ENCODE measurements at regions of chr13 and their contacts with region 1.

Region 1: GRCh38 chr13:91216928-91217690 is 130.4 kb upstream of the MIR17HG start:
- DNase-seq: no peak
- ATAC-seq: no peak
- H3K4me3 ChIP-seq: no peak overlapping the region
- H3K27ac ChIP-seq: no peak overlapping the region
- H3K4me1 ChIP-seq: no peaks in the 10 kb centered on the region
- H3K27me3 ChIP-seq: no peaks in the 10 kb centered on the region
- CTCF ChIP-seq: no peak
- EP300 ChIP-seq: no peak
- POLR2A ChIP-seq: no peak
- RAD21 ChIP-seq: no peak

Region 2: GRCh38 chr13:91167706-91168385 is 49.3 kb before region 1 on chr13:
- CTCF ChIA-PET with region 1: no interaction called
- POLR2A ChIA-PET with region 1: no interaction called
- in situ Hi-C with region 1: no loop called
- intact Hi-C with region 1: loop called (anchors 5 kb)
- DNase-seq: no peak
- ATAC-seq: no peak
- H3K4me3 ChIP-seq: no peak overlapping the region
- H3K27ac ChIP-seq: no peak overlapping the region
- H3K4me1 ChIP-seq: no peaks in the 10 kb centered on the region
- H3K27me3 ChIP-seq: no peaks in the 10 kb centered on the region
- CTCF ChIP-seq: no peak
- EP300 ChIP-seq: no peak
- POLR2A ChIP-seq: no peak
- RAD21 ChIP-seq: no peak

Region 3: GRCh38 chr13:91185294-91185863 is 31.7 kb before region 1 on chr13:
- CTCF ChIA-PET with region 1: no interaction called
- POLR2A ChIA-PET with region 1: interaction called, 4 read pairs
- in situ Hi-C with region 1: no loop called
- intact Hi-C with region 1: loop called (anchors 5 kb)
- DNase-seq: peak in 1 of 4 experiments; percentile 28
- ATAC-seq: peak; percentile 40; the same call in 1 of the 3 replicates
- H3K4me3 ChIP-seq: no peak overlapping the region
- H3K27ac ChIP-seq: no peak overlapping the region
- H3K4me1 ChIP-seq: no peaks in the 10 kb centered on the region
- H3K27me3 ChIP-seq: no peaks in the 10 kb centered on the region
- CTCF ChIP-seq: peak in 2 of 3 experiments; percentile 33 to 50; a peak in 3 of 6 replicates
- EP300 ChIP-seq: no peak
- POLR2A ChIP-seq: no peak
- RAD21 ChIP-seq: peak; percentile 51 to 73

Region 4: GRCh38 chr13:91238036-91238435 is 20.9 kb after region 1 on chr13:
- CTCF ChIA-PET with region 1: no interaction called
- POLR2A ChIA-PET with region 1: interaction called, 3 read pairs
- in situ Hi-C with region 1: no loop called
- intact Hi-C with region 1: loop called (anchors 2 kb)
- DNase-seq: no peak
- ATAC-seq: no peak
- H3K4me3 ChIP-seq: no peak overlapping the region
- H3K27ac ChIP-seq: no peak overlapping the region
- H3K4me1 ChIP-seq: no peaks in the 10 kb centered on the region
- H3K27me3 ChIP-seq: no peaks in the 10 kb centered on the region
- CTCF ChIP-seq: no peak
- EP300 ChIP-seq: no peak
- POLR2A ChIP-seq: no peak
- RAD21 ChIP-seq: no peak

Region 5: DNA sequence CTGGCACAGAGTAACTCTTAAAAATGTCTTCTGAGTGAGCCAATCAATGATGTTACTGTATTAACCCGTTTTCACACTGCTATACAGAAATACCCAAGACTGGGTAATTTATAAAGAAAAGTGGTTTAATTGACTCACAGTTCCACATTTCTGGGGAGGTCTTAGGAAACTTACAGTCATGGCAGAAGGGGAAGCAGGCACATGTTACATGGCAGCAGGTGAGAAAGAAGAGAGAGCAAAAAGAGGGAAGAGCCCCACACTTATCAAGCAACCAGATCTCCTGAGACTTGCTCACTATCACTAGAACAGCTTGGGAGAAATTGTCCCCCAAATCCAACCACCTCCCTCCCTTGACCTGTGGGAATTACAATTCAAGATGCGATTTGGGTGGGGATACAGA is 32.8 kb after region 1 on chr13:
- CTCF ChIA-PET with region 1: no interaction called
- POLR2A ChIA-PET with region 1: interaction called, 3 read pairs
- in situ Hi-C with region 1: no loop called
- intact Hi-C with region 1: loop called (anchors 5 kb)
- DNase-seq: no peak
- ATAC-seq: no peak
- H3K4me3 ChIP-seq: no peak overlapping the region
- H3K27ac ChIP-seq: no peak overlapping the region
- H3K4me1 ChIP-seq: no peaks in the 10 kb centered on the region
- H3K27me3 ChIP-seq: no peaks in the 10 kb centered on the region
- CTCF ChIP-seq: no peak
- EP300 ChIP-seq: no peak
- POLR2A ChIP-seq: no peak
- RAD21 ChIP-seq: no peak

Region 6: GRCh38 chr13:91278888-91279287 is 61.8 kb after region 1 on chr13:
- CTCF ChIA-PET with region 1: no interaction called
- POLR2A ChIA-PET with region 1: no interaction called
- in situ Hi-C with region 1: no loop called
- intact Hi-C with region 1: loop called (anchors 5 kb)
- DNase-seq: no peak
- ATAC-seq: no peak
- H3K4me3 ChIP-seq: no peak overlapping the region
- H3K27ac ChIP-seq: no peak overlapping the region
- H3K4me1 ChIP-seq: no peaks in the 10 kb centered on the region
- H3K27me3 ChIP-seq: no peaks in the 10 kb centered on the region
- CTCF ChIP-seq: no peak
- EP300 ChIP-seq: no peak
- POLR2A ChIP-seq: no peak
- RAD21 ChIP-seq: no peak

Region 7: DNA sequence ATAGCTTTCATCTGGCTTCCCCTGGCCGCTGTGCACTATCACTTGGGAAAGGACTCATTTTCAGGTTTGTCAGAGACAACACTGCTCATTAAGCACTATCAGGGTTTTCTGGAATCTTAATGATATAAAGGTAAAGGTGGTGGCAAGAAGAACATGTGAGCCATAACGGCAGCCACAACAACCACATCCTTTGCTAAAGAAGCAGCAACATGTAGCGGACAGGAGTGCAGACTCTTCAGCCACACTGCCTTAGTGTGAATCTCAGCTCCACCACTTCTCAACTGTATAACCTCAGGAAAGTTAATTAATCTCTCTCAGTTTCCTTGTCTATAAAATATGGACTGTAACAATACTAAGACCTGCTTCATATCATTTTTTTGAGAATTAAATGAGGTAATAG is 106.2 kb after region 1 on chr13:
- CTCF ChIA-PET with region 1: no interaction called
- POLR2A ChIA-PET with region 1: no interaction called
- in situ Hi-C with region 1: no loop called
- intact Hi-C with region 1: no loop called
- DNase-seq: no peak
- ATAC-seq: no peak
- H3K4me3 ChIP-seq: no peak overlapping the region
- H3K27ac ChIP-seq: no peak overlapping the region
- H3K4me1 ChIP-seq: no peaks in the 10 kb centered on the region
- H3K27me3 ChIP-seq: no peaks in the 10 kb centered on the region
- CTCF ChIP-seq: no peak
- EP300 ChIP-seq: no peak
- POLR2A ChIP-seq: no peak
- RAD21 ChIP-seq: no peak

Measured in K562 (cell line).